ENCODE measurements at regions of chr20 and their contacts with region 1.

Region 1: GRCh38 chr20:25160467-25160866 is 35.0 kb upstream of the ENTPD6 start:
- DNase-seq: no peak
- H3K4me3 ChIP-seq: no peak overlapping the region
- CTCF ChIP-seq: no peak

Region 2: DNA sequence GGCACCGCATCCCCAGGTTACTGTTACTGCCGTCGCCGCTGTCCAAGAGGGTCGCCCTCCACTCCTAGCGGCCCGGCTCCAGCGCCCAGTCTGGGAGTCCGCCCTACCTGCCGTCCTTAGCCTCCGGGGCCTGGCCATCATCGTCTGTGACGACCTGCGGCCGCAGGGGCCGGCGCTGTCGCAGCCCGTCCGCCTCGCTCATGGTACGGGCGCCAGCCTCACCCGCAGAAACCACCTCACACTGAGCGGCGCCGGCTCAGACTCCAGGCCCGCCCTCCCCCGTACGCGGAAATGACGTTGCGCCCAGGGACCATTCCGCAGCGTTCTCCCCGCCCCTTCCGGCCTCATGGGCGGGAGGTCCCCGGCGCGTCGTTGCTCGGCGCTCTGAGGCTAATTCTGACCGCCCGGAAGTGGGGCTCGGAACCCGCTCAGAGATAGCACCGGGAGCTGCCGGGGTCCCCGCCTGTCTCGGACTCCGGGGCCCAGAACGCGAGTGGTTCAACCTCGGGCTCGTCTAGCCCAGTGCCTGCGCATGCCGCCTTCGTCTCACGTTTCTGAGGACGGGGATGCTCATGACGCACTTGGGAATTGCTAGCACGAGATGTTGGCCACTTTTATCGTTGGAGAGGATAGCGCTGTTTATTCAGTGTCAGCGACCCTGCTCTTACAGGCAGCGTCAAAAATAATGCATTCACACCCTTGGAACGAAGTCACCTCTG is 167.8 kb before region 1 on chr20 and contains the start of gene APMAP:
- in situ Hi-C with region 1: loop called (anchors 25 kb)
- DNase-seq: peak; percentile 70
- H3K4me3 ChIP-seq: peak within 1 kb of the TSS; percentile 66
- CTCF ChIP-seq: no peak

Region 3: GRCh38 chr20:25084626-25085187 is 75.8 kb before region 1 on chr20:
- in situ Hi-C with region 1: loop called (anchors 5 kb)
- DNase-seq: no peak
- H3K4me3 ChIP-seq: no peak overlapping the region
- CTCF ChIP-seq: no peak

Region 4: GRCh38 chr20:25207146-25207959 is 46.9 kb after region 1 on chr20:
- in situ Hi-C with region 1: no loop called
- DNase-seq: no peak
- H3K4me3 ChIP-seq: no peak overlapping the region
- CTCF ChIP-seq: no peak

Region 5: DNA sequence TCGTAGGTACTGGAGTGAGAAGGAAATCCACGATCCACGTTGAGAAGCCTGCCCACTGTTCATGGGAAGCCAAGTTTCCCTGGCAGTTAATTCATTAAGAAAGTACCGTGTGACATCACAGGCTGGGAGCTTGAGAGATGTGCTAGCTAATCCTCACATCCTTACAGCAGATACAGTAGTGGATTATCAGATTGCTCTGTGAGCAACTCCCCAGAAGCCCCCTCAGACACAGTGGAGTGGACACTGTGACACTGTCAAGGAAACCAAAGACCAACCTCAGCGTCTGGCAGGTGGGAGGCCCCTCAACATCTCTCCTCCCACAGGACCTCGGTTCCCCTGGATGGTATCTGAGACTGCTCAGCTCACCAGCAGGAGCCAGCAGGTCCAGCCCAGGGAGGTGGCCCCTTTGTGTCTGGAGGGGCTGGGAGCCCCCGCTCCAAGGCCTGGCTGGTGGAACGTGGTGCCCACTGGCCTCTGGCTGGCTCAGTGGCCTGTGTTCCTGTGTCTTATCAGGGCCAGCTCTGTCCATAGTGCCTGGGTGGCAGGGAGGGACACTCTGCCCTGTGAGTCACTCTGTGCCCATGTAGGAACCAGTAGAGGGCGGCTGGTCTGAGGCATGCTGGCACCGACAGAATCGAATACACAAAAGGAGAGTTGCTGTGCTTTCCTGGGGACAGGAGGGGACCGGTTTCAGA is 94.7 kb after region 1 on chr20:
- in situ Hi-C with region 1: no loop called
- DNase-seq: no peak
- H3K4me3 ChIP-seq: no peak overlapping the region
- CTCF ChIP-seq: no peak

Region 6: GRCh38 chr20:25470045-25470444 is 309.6 kb after region 1 on chr20:
- in situ Hi-C with region 1: no loop called
- DNase-seq: peak; percentile 12
- H3K4me3 ChIP-seq: no peak overlapping the region
- CTCF ChIP-seq: peak; percentile 55

Measured in astrocyte of the cerebellum (primary cell).